Activated T-helper 2 cell treated with anti-CD3 and anti-CD28 coated beads, Interferon-gamma antibody, Interleukin-2, Interleukin-4, amounts not matched to agents 10 μg/mL and 5 μg/mL and 100 μg/mL, durations not matched to agents 14 hours and 24 hours and 36 hours (primary cell): ENCODE measurements at regions of chr16 and their contacts with region 1.

Region 1: DNA sequence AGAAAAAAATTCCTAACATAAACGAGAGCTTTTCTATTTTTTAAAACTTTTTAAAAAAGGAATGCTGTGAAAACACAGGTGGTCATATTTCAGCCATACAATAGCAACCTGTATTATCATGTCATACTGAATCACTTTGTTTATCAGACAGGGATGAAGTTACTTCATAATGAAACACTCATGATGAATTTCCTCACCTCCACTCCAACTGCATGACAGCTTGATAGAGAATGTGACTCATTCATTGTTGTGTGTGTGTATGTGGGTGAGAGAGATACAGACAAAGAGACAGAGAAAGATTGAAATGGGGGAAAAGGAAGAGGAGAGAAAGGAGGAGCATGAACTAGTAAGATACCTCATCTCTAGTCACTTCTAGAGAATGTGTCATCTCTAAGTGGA is 109.0 kb downstream of the SYCE1L start:
- DNase-seq: no peak
- H3K4me3 Mint-ChIP-seq: no peak overlapping the region
- H3K27ac Mint-ChIP-seq: peak overlapping the region; percentile 68
- H3K4me1 Mint-ChIP-seq: peaks cover 10% of the 10 kb centered on the region
- H3K27me3 Mint-ChIP-seq: no peaks in the 10 kb centered on the region

Region 2: GRCh38 chr16:76932541-76933211 is 375.5 kb before region 1 on chr16:
- intact Hi-C with region 1: loop called (anchors 10 kb)
- DNase-seq: no peak
- H3K4me3 Mint-ChIP-seq: no peak overlapping the region
- H3K27ac Mint-ChIP-seq: no peak overlapping the region
- H3K4me1 Mint-ChIP-seq: peaks cover 2% of the 10 kb centered on the region
- H3K27me3 Mint-ChIP-seq: peaks cover 3% of the 10 kb centered on the region

Region 3: GRCh38 chr16:77190478-77191258 is 117.5 kb before region 1 on chr16 and contains the start of gene MON1B:
- intact Hi-C with region 1: loop called (anchors 1 kb)
- DNase-seq: peak; percentile 94
- H3K4me3 Mint-ChIP-seq: peak within 1 kb of the TSS; percentile 97
- H3K27ac Mint-ChIP-seq: peak within 1 kb of the TSS; percentile 100
- H3K4me1 Mint-ChIP-seq: peaks cover 28% of the 10 kb centered on the region
- H3K27me3 Mint-ChIP-seq: peaks cover 3% of the 10 kb centered on the region
- total RNA-seq, gene MON1B: 69.2 and 69.6 TPM in 2 replicates

Region 4: GRCh38 chr16:77207030-77207429 is 101.1 kb before region 1 on chr16:
- intact Hi-C with region 1: no loop called
- DNase-seq: no peak
- H3K4me3 Mint-ChIP-seq: no peak overlapping the region
- H3K27ac Mint-ChIP-seq: no peak overlapping the region
- H3K4me1 Mint-ChIP-seq: peaks cover 8% of the 10 kb centered on the region
- H3K27me3 Mint-ChIP-seq: no peaks in the 10 kb centered on the region

Region 5: GRCh38 chr16:77330332-77331042 is 22.3 kb after region 1 on chr16:
- intact Hi-C with region 1: loop called (anchors 1 kb)
- DNase-seq: no peak
- H3K4me3 Mint-ChIP-seq: no peak overlapping the region
- H3K27ac Mint-ChIP-seq: no peak overlapping the region
- H3K4me1 Mint-ChIP-seq: peaks cover 12% of the 10 kb centered on the region
- H3K27me3 Mint-ChIP-seq: no peaks in the 10 kb centered on the region

Region 6: DNA sequence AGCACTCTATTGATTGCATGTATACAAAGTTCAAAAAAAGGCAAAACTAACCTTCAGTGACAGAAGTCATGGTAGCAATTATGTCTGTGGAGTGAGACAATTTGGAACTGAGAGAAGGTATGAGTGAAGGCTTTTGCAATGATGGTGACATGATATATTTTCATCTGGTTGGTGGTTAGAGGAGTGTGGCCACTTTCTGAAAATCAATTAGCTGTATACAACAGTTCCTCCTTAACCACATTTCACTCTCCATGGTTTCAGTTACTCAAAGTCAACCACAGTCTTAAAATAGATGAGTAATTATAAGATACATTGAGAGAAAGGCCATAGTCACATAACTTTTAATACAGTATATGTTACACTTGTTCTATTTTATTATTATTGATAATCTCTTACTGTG is 100.4 kb after region 1 on chr16:
- intact Hi-C with region 1: loop called (anchors 1 kb)
- DNase-seq: no peak
- H3K4me3 Mint-ChIP-seq: no peak overlapping the region
- H3K27ac Mint-ChIP-seq: no peak overlapping the region
- H3K4me1 Mint-ChIP-seq: peaks cover 3% of the 10 kb centered on the region
- H3K27me3 Mint-ChIP-seq: peaks cover 14% of the 10 kb centered on the region